ENCODE measurements at regions of chr6 and their contacts with region 1.

Region 1: GRCh38 chr6:151553416-151554165 is 59.8 kb downstream of the CCDC170 start:
- H3K4me3 Mint-ChIP-seq: no peak overlapping the region
- H3K27ac Mint-ChIP-seq: peak overlapping the region; percentile 95
- H3K4me1 Mint-ChIP-seq: peaks cover 32% of the 10 kb centered on the region
- H3K27me3 Mint-ChIP-seq: no peaks in the 10 kb centered on the region

Region 2: GRCh38 chr6:151482290-151482689 is 71.3 kb before region 1 on chr6:
- intact Hi-C with region 1: loop called (anchors 5 kb)
- H3K4me3 Mint-ChIP-seq: peak overlapping the region; percentile 49
- H3K27ac Mint-ChIP-seq: peak overlapping the region; percentile 84
- H3K4me1 Mint-ChIP-seq: peaks cover 43% of the 10 kb centered on the region
- H3K27me3 Mint-ChIP-seq: no peaks in the 10 kb centered on the region

Region 3: GRCh38 chr6:151512481-151512880 is 41.1 kb before region 1 on chr6:
- intact Hi-C with region 1: loop called (anchors 5 kb)
- H3K4me3 Mint-ChIP-seq: no peak overlapping the region
- H3K27ac Mint-ChIP-seq: peak overlapping the region; percentile 86
- H3K4me1 Mint-ChIP-seq: peaks cover 45% of the 10 kb centered on the region
- H3K27me3 Mint-ChIP-seq: no peaks in the 10 kb centered on the region